ENCODE measurements at regions of chr10 and their contacts with region 1.

Region 1: GRCh38 chr10:9342885-9343570 is 1288.5 kb downstream of the GATA3 start:
- DNase-seq: peak in 1 of 4 donors; percentile 12
- ATAC-seq: peak; percentile 50
- H3K4me3 ChIP-seq: no peak overlapping the region
- H3K27ac ChIP-seq: no peak overlapping the region
- H3K4me1 ChIP-seq: no peaks in the 10 kb centered on the region
- H3K27me3 ChIP-seq: no peaks in the 10 kb centered on the region
- CTCF ChIP-seq: peak; percentile 35 to 64 (median 58)
- POLR2A ChIP-seq: no peak

Region 2: GRCh38 chr10:9175200-9175599 is 167.8 kb before region 1 on chr10:
- intact Hi-C with region 1: no loop called
- DNase-seq: no peak
- ATAC-seq: no peak
- H3K4me3 ChIP-seq: no peak overlapping the region
- H3K27ac ChIP-seq: no peak overlapping the region
- H3K4me1 ChIP-seq: no peaks in the 10 kb centered on the region
- H3K27me3 ChIP-seq: no peaks in the 10 kb centered on the region
- CTCF ChIP-seq: no peak
- POLR2A ChIP-seq: no peak

Region 3: DNA sequence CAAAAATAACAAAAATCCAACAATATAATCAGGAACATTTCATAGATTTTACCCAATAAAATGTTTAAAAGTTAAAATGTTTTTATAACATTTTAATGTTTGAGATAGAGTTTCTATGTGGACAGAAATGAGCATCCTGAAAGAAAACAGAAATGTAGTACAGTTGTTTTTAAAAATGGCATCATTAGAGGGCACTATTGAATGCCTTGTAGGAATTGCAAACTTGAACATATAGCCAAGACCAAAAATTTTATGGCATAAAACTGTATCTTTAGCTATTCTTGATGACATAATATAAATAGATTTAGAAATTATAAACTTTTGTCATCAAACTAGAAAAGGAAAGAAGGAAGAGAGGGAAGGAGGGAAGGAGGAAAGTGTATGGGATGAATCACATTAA is 84.2 kb after region 1 on chr10:
- intact Hi-C with region 1: no loop called
- DNase-seq: no peak
- ATAC-seq: no peak
- H3K4me3 ChIP-seq: no peak overlapping the region
- H3K27ac ChIP-seq: no peak overlapping the region
- H3K4me1 ChIP-seq: no peaks in the 10 kb centered on the region
- H3K27me3 ChIP-seq: no peaks in the 10 kb centered on the region
- CTCF ChIP-seq: no peak
- POLR2A ChIP-seq: no peak

Region 4: GRCh38 chr10:9636216-9636615 is 293.2 kb after region 1 on chr10:
- intact Hi-C with region 1: no loop called
- DNase-seq: no peak
- ATAC-seq: no peak
- H3K4me3 ChIP-seq: no peak overlapping the region
- H3K27ac ChIP-seq: no peak overlapping the region
- H3K4me1 ChIP-seq: no peaks in the 10 kb centered on the region
- H3K27me3 ChIP-seq: no peaks in the 10 kb centered on the region
- CTCF ChIP-seq: no peak
- POLR2A ChIP-seq: no peak

Region 5: GRCh38 chr10:11036407-11037011 is 1693.5 kb after region 1 on chr10:
- intact Hi-C with region 1: loop called (anchors 10 kb)
- DNase-seq: peak; percentile 44 to 67 (median 59)
- ATAC-seq: peak; percentile 66
- H3K4me3 ChIP-seq: no peak overlapping the region
- H3K27ac ChIP-seq: no peak overlapping the region
- H3K4me1 ChIP-seq: peaks cover 5% of the 10 kb centered on the region
- H3K27me3 ChIP-seq: peaks cover 0 to 6% of the 10 kb centered on the region in 2 donors
- CTCF ChIP-seq: peak; percentile 38 to 68 (median 60)
- POLR2A ChIP-seq: no peak